Body of pancreas (tissue), 4 donors: ENCODE measurements at regions of chr9 and their contacts with region 1.

Region 1: GRCh38 chr9:131423171-131423581 is 29.3 kb downstream of the PRRC2B start:
- DNase-seq: peak; percentile 54 to 81 (median 74)
- ATAC-seq: peak; percentile 63
- H3K4me3 ChIP-seq: no peak overlapping the region
- H3K27ac ChIP-seq: peak overlapping the region; percentile 27 to 76 (median 66)
- H3K4me1 ChIP-seq: peaks cover 58% of the 10 kb centered on the region
- H3K27me3 ChIP-seq: no peaks in the 10 kb centered on the region
- CTCF ChIP-seq: no peak
- POLR2A ChIP-seq: no peak

Region 2: GRCh38 chr9:131370638-131371037 is 52.5 kb before region 1 on chr9:
- intact Hi-C with region 1: loop called (anchors 10 kb)
- DNase-seq: no peak
- ATAC-seq: no peak
- H3K4me3 ChIP-seq: no peak overlapping the region
- H3K27ac ChIP-seq: no peak overlapping the region
- H3K4me1 ChIP-seq: peaks cover 12% of the 10 kb centered on the region
- H3K27me3 ChIP-seq: no peaks in the 10 kb centered on the region
- CTCF ChIP-seq: no peak
- POLR2A ChIP-seq: no peak